HEK293T (cell line): ENCODE measurements at regions of chr1 and their contacts with region 1.

Region 1: GRCh38 chr1:148388260-148389027 is 94.7 kb downstream of the PPIAL4G start:
- DNase-seq: peak; percentile 93

Region 2: GRCh38 chr1:148354284-148354912 is 34.0 kb before region 1 on chr1:
- CTCF ChIA-PET with region 1: no interaction called
- POLR2A ChIA-PET with region 1: interaction called, 10 read pairs
- DNase-seq: no peak

Region 3: GRCh38 chr1:148373192-148373925 is 15.1 kb before region 1 on chr1:
- CTCF ChIA-PET with region 1: interaction called, 4 read pairs
- POLR2A ChIA-PET with region 1: interaction called, 18 read pairs
- DNase-seq: no peak